ENCODE measurements at regions of chr17 and their contacts with region 1.

Region 1: GRCh38 chr17:73710095-73710592 is 65.9 kb upstream of the SDK2 start:
- DNase-seq: peak; percentile 77
- ATAC-seq: peak; percentile 61
- H3K4me3 ChIP-seq: no peak overlapping the region
- H3K4me3 Mint-ChIP-seq: no peak overlapping the region
- H3K27ac ChIP-seq: no peak overlapping the region
- H3K27ac Mint-ChIP-seq: no peak overlapping the region
- H3K4me1 ChIP-seq: peaks cover 19 to 28% of the 10 kb centered on the region in 2 donors
- H3K4me1 Mint-ChIP-seq: peaks cover 22% of the 10 kb centered on the region
- H3K27me3 ChIP-seq: peaks cover 0 to 11% (median 3%) of the 10 kb centered on the region in 4 experiments
- H3K27me3 Mint-ChIP-seq: peaks cover 17% of the 10 kb centered on the region
- CTCF ChIP-seq: peak; percentile 81

Region 2: DNA sequence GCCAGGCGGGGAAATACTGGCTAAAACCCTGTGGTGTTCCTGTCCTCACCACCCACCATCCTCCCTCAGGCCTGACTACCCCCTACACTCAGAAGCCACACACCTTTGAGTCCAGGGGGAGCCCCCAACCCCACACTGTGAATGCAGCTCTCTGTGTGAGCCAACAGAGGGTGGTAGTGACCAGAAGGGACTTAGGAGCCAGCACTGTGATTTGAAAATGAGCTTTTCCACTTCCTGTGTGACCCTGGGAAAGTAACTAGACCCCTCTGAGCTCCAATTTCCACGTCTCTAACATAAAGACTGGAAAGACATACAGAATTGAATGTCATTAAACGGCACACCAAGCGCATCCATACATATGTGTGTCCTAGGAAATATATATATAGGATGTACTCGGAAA is 124.6 kb before region 1 on chr17:
- CTCF ChIA-PET with region 1: interaction called, 22 read pairs
- POLR2A ChIA-PET with region 1: interaction called, 3 read pairs
- intact Hi-C with region 1: loop called (anchors 2 kb)
- DNase-seq: no peak
- ATAC-seq: peak; percentile 52
- H3K4me3 ChIP-seq: no peak overlapping the region
- H3K4me3 Mint-ChIP-seq: no peak overlapping the region
- H3K27ac ChIP-seq: no peak overlapping the region
- H3K27ac Mint-ChIP-seq: peak overlapping the region; percentile 41
- H3K4me1 ChIP-seq: peaks cover 55 to 60% of the 10 kb centered on the region in 2 donors
- H3K4me1 Mint-ChIP-seq: peaks cover 70% of the 10 kb centered on the region
- H3K27me3 ChIP-seq: no peaks in the 10 kb centered on the region
- H3K27me3 Mint-ChIP-seq: no peaks in the 10 kb centered on the region
- CTCF ChIP-seq: peak; percentile 20

Region 3: DNA sequence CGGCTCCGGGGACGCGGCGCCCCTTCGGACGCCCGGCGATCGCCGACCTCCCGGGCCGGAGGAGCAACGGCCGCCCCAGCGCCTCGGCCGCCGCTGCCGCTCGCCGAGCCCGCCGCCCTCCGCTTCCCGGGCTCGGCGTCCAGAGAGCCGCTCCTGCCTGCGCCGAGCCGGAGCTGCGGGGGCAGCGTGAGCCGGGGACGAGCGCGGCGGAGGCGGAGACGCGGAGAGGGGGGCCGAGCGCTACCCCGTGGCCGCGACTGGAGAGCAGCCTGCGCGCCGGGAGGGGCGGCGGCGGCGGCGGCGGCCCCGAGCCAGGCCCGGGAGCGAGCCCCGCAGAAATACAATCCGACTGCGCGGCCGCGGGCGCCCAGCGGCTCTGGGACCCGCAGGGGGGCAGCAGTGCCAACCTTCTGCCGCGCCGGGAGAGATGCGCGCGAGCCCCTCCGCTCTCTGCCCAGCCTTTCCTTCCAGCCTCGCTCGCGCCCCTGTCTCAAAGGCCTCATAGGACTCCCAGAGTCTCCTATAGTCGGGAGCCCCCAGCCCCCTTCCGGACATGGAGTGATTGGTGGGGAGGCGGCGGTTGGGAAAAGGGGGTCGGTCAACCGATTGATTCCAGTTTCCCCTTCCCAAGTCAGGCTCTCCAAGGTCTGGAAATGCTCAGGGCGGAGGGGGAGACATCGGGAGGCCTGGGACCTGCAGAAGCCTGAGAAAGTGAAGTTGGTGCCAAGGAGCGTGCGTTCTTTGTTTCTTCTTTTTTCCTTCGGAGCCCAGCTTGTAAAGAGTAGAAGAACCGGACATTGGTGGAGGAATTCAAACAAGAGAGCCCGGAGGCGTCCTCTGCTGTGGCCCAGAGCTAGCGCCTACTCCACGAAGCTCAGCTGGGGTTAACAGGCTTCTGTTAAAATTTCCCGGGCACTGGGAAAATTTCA is 64.8 kb before region 1 on chr17:
- CTCF ChIA-PET with region 1: interaction called, 18 read pairs
- POLR2A ChIA-PET with region 1: no interaction called
- intact Hi-C with region 1: loop called (anchors 5 kb)
- DNase-seq: peak; percentile 82
- ATAC-seq: peak; percentile 70
- H3K4me3 ChIP-seq: peak overlapping the region in 3 of 5 experiments; percentile 41 to 72 (median 63)
- H3K4me3 Mint-ChIP-seq: peak overlapping the region; percentile 73
- H3K27ac ChIP-seq: no peak overlapping the region
- H3K27ac Mint-ChIP-seq: peak overlapping the region; percentile 50
- H3K4me1 ChIP-seq: peaks cover 20 to 38% of the 10 kb centered on the region in 2 donors
- H3K4me1 Mint-ChIP-seq: peaks cover 26% of the 10 kb centered on the region
- H3K27me3 ChIP-seq: peaks cover 0 to 23% (median 0%) of the 10 kb centered on the region in 4 experiments
- H3K27me3 Mint-ChIP-seq: peaks cover 4% of the 10 kb centered on the region
- CTCF ChIP-seq: no peak

Measured in B cell (primary cell).